Activated CD4-positive, alpha-beta memory T cell treated with anti-CD3 and anti-CD28 coated beads, Interleukin-2, amount 10 ng/mL, durations not matched to agents 7 days and 5 days (primary cell): ENCODE measurements at regions of chr17 and their contacts with region 1.

Region 1: GRCh38 chr17:5468075-5468473 is 708 bp downstream of the DHX33 start:
- DNase-seq: peak; percentile 19
- H3K4me3 Mint-ChIP-seq: peak overlapping the region; percentile 84
- H3K27ac Mint-ChIP-seq: peak overlapping the region; percentile 32
- H3K4me1 Mint-ChIP-seq: peaks cover 44% of the 10 kb centered on the region
- H3K27me3 Mint-ChIP-seq: no peaks in the 10 kb centered on the region

Region 2: DNA sequence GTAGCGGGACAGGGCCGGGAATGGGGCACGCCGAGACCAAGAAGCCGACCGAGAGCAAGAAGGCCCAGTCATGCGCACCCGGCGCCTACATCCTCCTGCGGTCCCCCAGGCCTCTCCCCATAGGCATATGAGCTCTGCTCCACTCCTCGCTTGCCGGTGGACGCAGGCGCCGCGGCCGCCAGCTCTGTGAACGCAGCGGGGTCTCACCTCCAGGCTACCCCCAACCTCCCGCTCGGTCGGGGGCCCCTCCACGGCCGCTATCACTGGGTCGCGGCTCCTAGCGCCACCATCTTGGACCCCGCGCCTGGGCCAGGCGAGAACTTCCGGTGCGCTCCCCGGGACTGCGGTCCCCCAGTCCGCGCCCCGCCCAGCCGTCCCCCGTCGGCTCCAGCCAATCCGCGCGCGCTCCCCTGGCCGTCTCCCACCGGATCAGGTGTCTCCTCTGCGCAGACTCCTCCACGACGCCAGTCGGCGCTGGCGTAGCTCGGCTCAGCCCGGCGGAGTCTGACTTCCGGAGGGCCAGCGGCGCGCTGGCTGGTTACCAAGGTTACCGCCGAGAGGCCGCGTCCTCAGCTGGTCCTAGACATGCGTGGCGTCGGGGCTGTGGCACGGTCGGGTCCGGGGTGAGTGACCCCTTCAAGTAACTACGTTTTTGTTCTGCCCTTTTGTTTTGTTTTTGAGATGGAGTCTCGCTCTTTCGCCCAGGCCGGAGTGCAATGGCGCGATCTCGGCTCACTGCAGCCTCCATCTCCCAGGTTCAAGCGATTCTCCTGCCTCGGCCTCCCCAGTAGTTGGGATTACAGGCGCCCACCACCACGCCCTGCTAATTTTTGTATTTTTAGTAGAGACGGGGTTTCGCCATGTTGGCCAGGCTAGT is 276.3 kb before region 1 on chr17 and contains the start of gene ZNF594:
- CTCF ChIA-PET with region 1: no interaction called
- POLR2A ChIA-PET with region 1: interaction called, 14 read pairs
- DNase-seq: peak; percentile 97
- H3K4me3 Mint-ChIP-seq: peak within 1 kb of the TSS; percentile 93
- H3K27ac Mint-ChIP-seq: peak within 1 kb of the TSS; percentile 87
- H3K4me1 Mint-ChIP-seq: peaks cover 33% of the 10 kb centered on the region
- H3K27me3 Mint-ChIP-seq: no peaks in the 10 kb centered on the region
- total RNA-seq, gene ZNF594: 7.0 to 8.6 TPM

Region 3: GRCh38 chr17:5419356-5419958 is 48.6 kb before region 1 on chr17 and contains the start of gene NUP88:
- CTCF ChIA-PET with region 1: no interaction called
- POLR2A ChIA-PET with region 1: interaction called, 13 read pairs
- DNase-seq: peak; percentile 97
- H3K4me3 Mint-ChIP-seq: peak within 1 kb of the TSS; percentile 99
- H3K27ac Mint-ChIP-seq: peak within 1 kb of the TSS; percentile 99
- H3K4me1 Mint-ChIP-seq: peaks cover 45% of the 10 kb centered on the region
- H3K27me3 Mint-ChIP-seq: no peaks in the 10 kb centered on the region
- total RNA-seq, gene NUP88: 80.6 to 85.9 TPM

Region 4: GRCh38 chr17:5438716-5439445 is 29.2 kb before region 1 on chr17 and contains the start of gene C1QBP:
- CTCF ChIA-PET with region 1: interaction called, 21 read pairs
- POLR2A ChIA-PET with region 1: interaction called, 16 read pairs
- DNase-seq: peak; percentile 94
- H3K4me3 Mint-ChIP-seq: peak within 1 kb of the TSS; percentile 72
- H3K27ac Mint-ChIP-seq: peak within 1 kb of the TSS; percentile 85
- H3K4me1 Mint-ChIP-seq: peaks cover 44% of the 10 kb centered on the region
- H3K27me3 Mint-ChIP-seq: no peaks in the 10 kb centered on the region
- total RNA-seq, gene C1QBP: 123 TPM

Region 5: DNA sequence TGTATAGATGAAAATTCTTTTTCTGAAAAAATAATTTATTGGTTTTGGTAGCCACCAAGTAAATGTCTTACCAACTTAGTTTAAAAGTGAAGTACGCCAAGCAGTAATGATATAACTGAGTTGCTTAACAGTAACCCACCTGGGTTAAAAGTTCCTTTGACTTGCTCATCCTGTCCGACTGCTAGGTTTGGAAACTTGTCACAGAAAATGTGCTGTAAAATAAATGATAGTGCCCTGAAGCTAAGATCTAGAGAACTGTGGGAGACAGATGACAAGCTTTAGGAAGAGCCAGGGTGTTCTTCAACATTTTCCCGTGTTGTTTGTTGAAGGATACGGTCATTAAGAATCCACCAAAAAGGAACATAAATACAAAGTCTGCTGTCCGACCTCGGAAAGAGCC is 12.9 kb after region 1 on chr17:
- CTCF ChIA-PET with region 1: interaction called, 5 read pairs
- POLR2A ChIA-PET with region 1: interaction called, 46 read pairs
- DNase-seq: no peak
- H3K4me3 Mint-ChIP-seq: no peak overlapping the region
- H3K27ac Mint-ChIP-seq: no peak overlapping the region
- H3K4me1 Mint-ChIP-seq: peaks cover 37% of the 10 kb centered on the region
- H3K27me3 Mint-ChIP-seq: no peaks in the 10 kb centered on the region

Region 6: GRCh38 chr17:5508810-5509209 is 40.7 kb after region 1 on chr17:
- CTCF ChIA-PET with region 1: no interaction called
- POLR2A ChIA-PET with region 1: no interaction called
- DNase-seq: no peak
- H3K4me3 Mint-ChIP-seq: no peak overlapping the region
- H3K27ac Mint-ChIP-seq: no peak overlapping the region
- H3K4me1 Mint-ChIP-seq: peaks cover 24% of the 10 kb centered on the region
- H3K27me3 Mint-ChIP-seq: no peaks in the 10 kb centered on the region

Region 7: GRCh38 chr17:5563456-5563855 is 95.4 kb after region 1 on chr17:
- CTCF ChIA-PET with region 1: no interaction called
- POLR2A ChIA-PET with region 1: no interaction called
- DNase-seq: no peak
- H3K4me3 Mint-ChIP-seq: no peak overlapping the region
- H3K27ac Mint-ChIP-seq: no peak overlapping the region
- H3K4me1 Mint-ChIP-seq: no peaks in the 10 kb centered on the region
- H3K27me3 Mint-ChIP-seq: no peaks in the 10 kb centered on the region